Heart left ventricle (tissue), 16 donors: ENCODE measurements at regions of chr5 and their contacts with region 1.

Region 1: DNA sequence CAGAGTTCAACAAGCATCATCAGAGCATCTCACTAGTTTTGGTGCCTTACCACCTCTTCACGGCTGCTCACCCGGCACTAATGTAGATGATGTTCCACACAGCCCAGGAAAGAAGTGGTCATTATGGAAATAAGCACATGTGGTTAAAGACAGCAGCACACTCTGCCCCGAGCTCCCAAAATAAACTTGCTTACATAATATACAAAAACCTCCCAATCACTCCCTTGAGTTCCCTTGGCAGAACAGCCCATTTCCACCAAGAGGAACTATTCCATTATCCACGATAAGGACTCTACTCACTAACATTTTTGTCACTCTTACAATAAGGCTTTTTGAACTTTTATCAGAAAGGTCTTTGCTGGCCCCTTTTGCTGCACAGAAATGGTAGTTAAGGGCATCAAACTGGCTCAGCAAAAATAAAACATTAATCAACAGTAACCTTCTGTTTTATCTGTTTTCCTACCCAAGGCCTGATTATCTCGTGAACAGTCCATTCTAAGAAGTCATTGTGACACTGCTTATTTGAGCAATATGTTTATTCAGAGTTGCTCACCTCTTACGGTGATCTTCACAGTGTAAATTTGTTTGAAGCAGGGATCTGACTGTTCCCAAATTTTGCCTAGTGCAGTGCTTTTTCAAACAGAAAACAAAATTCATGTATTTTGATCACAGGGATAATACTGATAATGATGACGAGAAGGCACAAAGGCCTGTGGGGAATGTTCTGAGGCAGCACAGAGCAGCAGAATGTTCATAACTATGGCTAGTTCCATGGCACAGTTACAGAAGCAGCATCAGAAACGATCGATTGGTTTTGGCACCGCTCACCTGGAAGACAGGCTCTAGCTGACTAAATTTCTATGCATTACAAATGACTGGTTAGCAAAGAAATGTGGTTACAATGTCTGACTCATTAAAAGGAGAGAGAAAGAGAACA is 399.8 kb upstream of the PIK3R1 start:
- DNase-seq: peak in 4 of 5 donors; percentile 31 to 43 (median 38)
- ATAC-seq: peak; percentile 93 to 96 (median 96)
- H3K4me3 ChIP-seq: no peak overlapping the region
- H3K27ac ChIP-seq: peak overlapping the region; percentile 4 to 88 (median 72)
- H3K4me1 ChIP-seq: peaks cover 0 to 32% (median 26%) of the 10 kb centered on the region in 12 donors
- H3K27me3 ChIP-seq: no peaks in the 10 kb centered on the region
- CTCF ChIP-seq: no peak
- POLR2A ChIP-seq: no peak

Region 2: GRCh38 chr5:67870662-67871061 is 54.9 kb after region 1 on chr5:
- intact Hi-C with region 1: loop called in 1 of 10 experiments (anchors 5 kb)
- DNase-seq: no peak
- ATAC-seq: no peak
- H3K4me3 ChIP-seq: no peak overlapping the region
- H3K27ac ChIP-seq: no peak overlapping the region
- H3K4me1 ChIP-seq: peaks cover 0 to 7% (median 0%) of the 10 kb centered on the region in 12 donors
- H3K27me3 ChIP-seq: no peaks in the 10 kb centered on the region
- CTCF ChIP-seq: no peak
- POLR2A ChIP-seq: no peak

Region 3: GRCh38 chr5:67908126-67908765 is 92.5 kb after region 1 on chr5:
- intact Hi-C with region 1: no loop called
- DNase-seq: no peak
- ATAC-seq: no peak
- H3K4me3 ChIP-seq: no peak overlapping the region
- H3K27ac ChIP-seq: no peak overlapping the region
- H3K4me1 ChIP-seq: peaks cover 0 to 23% (median 0%) of the 10 kb centered on the region in 12 donors
- H3K27me3 ChIP-seq: no peaks in the 10 kb centered on the region
- CTCF ChIP-seq: no peak
- POLR2A ChIP-seq: no peak

Region 4: GRCh38 chr5:68225188-68225910 is 409.6 kb after region 1 on chr5:
- intact Hi-C with region 1: loop called in 1 of 10 experiments (anchors 10 kb)
- DNase-seq: peak in 4 of 5 donors; percentile 61 to 81 (median 62)
- ATAC-seq: peak; percentile 37 to 70 (median 54)
- H3K4me3 ChIP-seq: peak overlapping the region in 5 of 12 donors; percentile 0 to 13 (median 10)
- H3K27ac ChIP-seq: peak overlapping the region; percentile 6 to 75 (median 58)
- H3K4me1 ChIP-seq: peaks cover 8 to 93% (median 85%) of the 10 kb centered on the region in 12 donors
- H3K27me3 ChIP-seq: no peaks in the 10 kb centered on the region
- CTCF ChIP-seq: no peak
- POLR2A ChIP-seq: no peak